ENCODE measurements at regions of chr6 and their contacts with region 1.

Region 1: GRCh38 chr6:26553635-26554446 is 15.7 kb downstream of the HMGN4 start:
- DNase-seq: peak; percentile 89
- ATAC-seq: peak; percentile 58
- H3K4me3 Mint-ChIP-seq: no peak overlapping the region
- H3K27ac Mint-ChIP-seq: no peak overlapping the region
- H3K4me1 Mint-ChIP-seq: peaks cover 27% of the 10 kb centered on the region
- H3K27me3 Mint-ChIP-seq: no peaks in the 10 kb centered on the region

Region 2: DNA sequence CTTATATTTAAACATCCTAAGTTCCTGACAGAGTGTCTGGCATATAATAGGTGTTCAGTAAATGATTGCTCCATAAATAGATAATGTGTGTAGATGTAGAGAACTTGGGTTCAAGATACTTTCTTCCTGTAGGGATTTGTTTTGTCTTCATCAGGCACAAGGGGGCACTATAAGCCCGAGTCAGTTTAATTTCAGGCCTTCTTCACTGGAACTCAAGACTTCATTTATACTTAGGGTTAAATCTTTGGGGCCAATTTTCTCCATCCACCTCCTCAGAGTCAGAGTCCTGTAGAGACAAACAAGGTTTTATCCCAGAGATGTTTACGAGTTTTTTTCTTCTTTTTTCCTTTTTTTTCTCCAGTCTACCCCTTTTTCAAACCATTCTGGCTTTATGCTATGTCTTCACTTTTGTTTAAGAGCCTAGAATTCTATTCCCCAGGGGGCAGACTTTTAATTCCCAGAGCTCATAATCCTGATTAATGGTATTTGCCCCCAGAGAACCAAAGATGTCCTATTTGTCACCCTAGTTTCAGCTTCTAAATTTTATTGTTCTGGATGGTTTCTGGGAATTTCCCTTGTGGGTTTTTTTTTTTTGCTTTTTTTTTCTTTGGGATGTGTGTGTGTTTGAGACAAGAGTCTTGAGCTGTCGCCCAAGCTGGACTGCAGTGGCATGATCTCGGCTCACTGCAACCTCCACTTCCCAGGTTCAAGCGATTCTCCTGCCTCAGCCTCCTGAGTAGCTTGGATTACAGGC is 378.2 kb before region 1 on chr6:
- CTCF ChIA-PET with region 1: no interaction called
- POLR2A ChIA-PET with region 1: no interaction called
- intact Hi-C with region 1: loop called in 1 of 2 experiments (anchors 5 kb)
- DNase-seq: peak; percentile 69
- ATAC-seq: peak; percentile 14
- H3K4me3 Mint-ChIP-seq: peak overlapping the region; percentile 30
- H3K27ac Mint-ChIP-seq: peak overlapping the region; percentile 80
- H3K4me1 Mint-ChIP-seq: peaks cover 33% of the 10 kb centered on the region
- H3K27me3 Mint-ChIP-seq: no peaks in the 10 kb centered on the region

Region 3: GRCh38 chr6:26258200-26258977 is 295.5 kb before region 1 on chr6:
- CTCF ChIA-PET with region 1: no interaction called
- POLR2A ChIA-PET with region 1: no interaction called
- intact Hi-C with region 1: no loop called
- DNase-seq: no peak
- ATAC-seq: no peak
- H3K4me3 Mint-ChIP-seq: no peak overlapping the region
- H3K27ac Mint-ChIP-seq: no peak overlapping the region
- H3K4me1 Mint-ChIP-seq: no peaks in the 10 kb centered on the region
- H3K27me3 Mint-ChIP-seq: no peaks in the 10 kb centered on the region

Region 4: GRCh38 chr6:26312501-26313390 is 241.1 kb before region 1 on chr6:
- CTCF ChIA-PET with region 1: no interaction called
- POLR2A ChIA-PET with region 1: no interaction called
- intact Hi-C with region 1: loop called (anchors 1 to 5 kb)
- DNase-seq: peak; percentile 89
- ATAC-seq: peak; percentile 69
- H3K4me3 Mint-ChIP-seq: peak overlapping the region; percentile 88
- H3K27ac Mint-ChIP-seq: peak overlapping the region; percentile 90
- H3K4me1 Mint-ChIP-seq: peaks cover 37% of the 10 kb centered on the region
- H3K27me3 Mint-ChIP-seq: peaks cover 3% of the 10 kb centered on the region

Region 5: DNA sequence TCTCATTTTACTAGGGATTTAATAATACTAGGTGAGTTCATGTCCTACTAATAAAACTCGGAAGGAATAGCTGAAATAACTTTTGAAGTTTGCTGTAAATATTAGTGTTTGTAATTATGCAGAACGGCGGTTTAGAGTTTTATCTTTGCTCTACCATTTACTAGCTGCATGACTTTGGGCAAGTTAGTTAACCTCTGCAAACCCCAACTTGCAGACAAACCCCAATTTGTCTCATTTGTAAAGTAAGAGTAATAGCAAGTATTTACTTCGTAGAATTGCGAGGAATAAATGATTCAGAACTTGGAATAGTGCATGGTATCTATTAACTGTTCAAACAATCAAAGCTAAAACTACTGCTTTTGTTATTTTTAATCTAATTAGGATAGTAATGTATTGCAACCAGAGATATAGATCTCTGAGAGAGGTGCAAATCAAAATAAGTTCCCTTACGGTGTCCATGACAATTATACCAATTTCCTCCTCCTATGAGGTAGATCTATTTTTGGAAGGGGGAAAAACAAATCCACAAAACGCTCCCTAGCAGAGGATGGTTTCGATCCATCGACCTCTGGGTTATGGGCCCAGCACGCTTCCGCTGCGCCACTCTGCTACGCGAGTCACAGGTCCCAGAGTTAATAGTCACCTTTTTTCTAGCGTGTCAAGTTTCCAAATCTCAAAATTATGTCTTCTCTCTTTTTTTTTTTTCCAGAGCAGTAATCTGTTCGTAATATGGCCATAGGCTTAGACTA is 223.9 kb before region 1 on chr6:
- CTCF ChIA-PET with region 1: interaction called, 3 read pairs
- POLR2A ChIA-PET with region 1: interaction called, 3 read pairs
- intact Hi-C with region 1: loop called (anchors 1 to 2 kb)
- DNase-seq: peak; percentile 80
- ATAC-seq: peak; percentile 37
- H3K4me3 Mint-ChIP-seq: peak overlapping the region; percentile 88
- H3K27ac Mint-ChIP-seq: peak overlapping the region; percentile 70
- H3K4me1 Mint-ChIP-seq: peaks cover 38% of the 10 kb centered on the region
- H3K27me3 Mint-ChIP-seq: peaks cover 10% of the 10 kb centered on the region

Region 6: GRCh38 chr6:26464014-26464413 is 89.8 kb before region 1 on chr6:
- CTCF ChIA-PET with region 1: no interaction called
- POLR2A ChIA-PET with region 1: no interaction called
- intact Hi-C with region 1: no loop called
- DNase-seq: no peak
- ATAC-seq: no peak
- H3K4me3 Mint-ChIP-seq: no peak overlapping the region
- H3K27ac Mint-ChIP-seq: peak overlapping the region; percentile 23
- H3K4me1 Mint-ChIP-seq: peaks cover 45% of the 10 kb centered on the region
- H3K27me3 Mint-ChIP-seq: no peaks in the 10 kb centered on the region

Region 7: DNA sequence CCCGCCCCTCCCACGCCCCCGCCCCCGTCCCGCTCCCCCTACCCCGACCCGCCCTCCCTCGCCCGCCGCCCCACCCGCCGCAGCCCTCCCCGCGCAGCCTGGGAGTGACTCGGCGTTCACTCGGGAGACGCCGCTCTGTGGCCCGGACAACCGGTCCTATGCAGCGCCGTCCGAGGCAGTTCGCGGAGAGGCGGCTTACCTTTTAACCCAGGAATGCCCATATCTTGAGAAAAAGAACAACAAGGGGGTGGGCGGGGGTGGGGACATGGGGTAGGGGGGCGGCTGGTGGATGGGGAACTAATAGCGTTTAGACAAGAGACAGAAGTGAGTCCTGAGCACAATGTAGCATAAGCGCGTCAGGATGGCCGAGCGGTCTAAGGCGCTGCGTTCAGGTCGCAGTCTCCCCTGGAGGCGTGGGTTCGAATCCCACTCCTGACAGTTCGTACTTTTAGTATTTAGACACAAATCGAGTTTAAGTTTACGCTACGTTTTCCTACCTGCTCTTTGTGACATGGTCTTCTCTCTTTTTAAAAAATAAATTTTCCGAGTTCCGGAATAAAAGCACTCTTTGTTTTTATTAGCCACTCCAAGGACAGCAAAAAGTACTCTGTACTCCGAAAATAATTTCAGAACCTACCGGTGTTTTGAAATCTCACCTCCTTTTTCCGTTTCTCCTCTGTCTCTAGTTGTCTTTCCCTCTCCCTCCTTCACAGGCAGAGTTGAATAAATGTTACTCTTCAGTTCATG is 32.8 kb before region 1 on chr6:
- CTCF ChIA-PET with region 1: interaction called, 4 read pairs
- POLR2A ChIA-PET with region 1: no interaction called
- intact Hi-C with region 1: loop called (anchors 1 kb)
- DNase-seq: peak; percentile 89
- ATAC-seq: peak; percentile 73
- H3K4me3 Mint-ChIP-seq: peak overlapping the region; percentile 85
- H3K27ac Mint-ChIP-seq: peak overlapping the region; percentile 94
- H3K4me1 Mint-ChIP-seq: peaks cover 24% of the 10 kb centered on the region
- H3K27me3 Mint-ChIP-seq: no peaks in the 10 kb centered on the region

Region 8: GRCh38 chr6:26568601-26569432 is 15.0 kb after region 1 on chr6:
- CTCF ChIA-PET with region 1: interaction called, 7 read pairs
- POLR2A ChIA-PET with region 1: interaction called, 6 read pairs
- intact Hi-C with region 1: loop called (anchors 1 kb)
- DNase-seq: peak; percentile 97
- ATAC-seq: peak; percentile 74
- H3K4me3 Mint-ChIP-seq: peak overlapping the region; percentile 85
- H3K27ac Mint-ChIP-seq: peak overlapping the region; percentile 81
- H3K4me1 Mint-ChIP-seq: peaks cover 29% of the 10 kb centered on the region
- H3K27me3 Mint-ChIP-seq: peaks cover 2% of the 10 kb centered on the region

Region 9: GRCh38 chr6:27472617-27473400 is 919.0 kb after region 1 on chr6 and contains the start of gene ZNF184:
- CTCF ChIA-PET with region 1: no interaction called
- POLR2A ChIA-PET with region 1: no interaction called
- intact Hi-C with region 1: loop called in 1 of 2 experiments (anchors 10 kb)
- DNase-seq: peak; percentile 91
- ATAC-seq: peak; percentile 83
- H3K4me3 Mint-ChIP-seq: peak within 1 kb of the TSS; percentile 84
- H3K27ac Mint-ChIP-seq: peak within 1 kb of the TSS; percentile 97
- H3K4me1 Mint-ChIP-seq: peaks cover 44% of the 10 kb centered on the region
- H3K27me3 Mint-ChIP-seq: no peaks in the 10 kb centered on the region
- total RNA-seq, gene ZNF184: 11.8 to 14.5 TPM